Right ventricle myocardium superior (tissue), 1 donor: ENCODE measurements at regions of chr1 and their contacts with region 1.

Region 1: DNA sequence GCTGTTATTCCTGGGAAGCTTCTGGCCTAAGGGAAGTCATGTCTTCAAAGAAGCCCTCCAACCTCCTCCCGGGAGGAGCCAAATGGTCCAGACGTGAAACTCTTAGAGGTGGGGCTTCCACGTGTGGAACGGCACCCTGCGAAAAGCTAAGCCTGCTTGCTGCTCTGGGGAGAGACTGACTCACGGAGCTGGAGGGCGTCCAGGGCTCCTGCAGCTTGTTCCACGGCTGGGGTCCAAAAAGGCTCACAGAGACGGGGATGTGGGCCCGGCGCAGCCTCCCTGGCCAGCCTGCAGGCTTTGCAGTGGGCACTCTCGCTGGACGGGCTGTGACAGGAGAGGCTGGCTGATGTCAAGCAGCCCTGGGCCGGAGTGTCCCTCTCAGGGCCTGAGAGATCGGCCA is 105.1 kb downstream of the COLGALT2 start:
- DNase-seq: peak; percentile 92
- ATAC-seq: peak; percentile 89

Region 2: DNA sequence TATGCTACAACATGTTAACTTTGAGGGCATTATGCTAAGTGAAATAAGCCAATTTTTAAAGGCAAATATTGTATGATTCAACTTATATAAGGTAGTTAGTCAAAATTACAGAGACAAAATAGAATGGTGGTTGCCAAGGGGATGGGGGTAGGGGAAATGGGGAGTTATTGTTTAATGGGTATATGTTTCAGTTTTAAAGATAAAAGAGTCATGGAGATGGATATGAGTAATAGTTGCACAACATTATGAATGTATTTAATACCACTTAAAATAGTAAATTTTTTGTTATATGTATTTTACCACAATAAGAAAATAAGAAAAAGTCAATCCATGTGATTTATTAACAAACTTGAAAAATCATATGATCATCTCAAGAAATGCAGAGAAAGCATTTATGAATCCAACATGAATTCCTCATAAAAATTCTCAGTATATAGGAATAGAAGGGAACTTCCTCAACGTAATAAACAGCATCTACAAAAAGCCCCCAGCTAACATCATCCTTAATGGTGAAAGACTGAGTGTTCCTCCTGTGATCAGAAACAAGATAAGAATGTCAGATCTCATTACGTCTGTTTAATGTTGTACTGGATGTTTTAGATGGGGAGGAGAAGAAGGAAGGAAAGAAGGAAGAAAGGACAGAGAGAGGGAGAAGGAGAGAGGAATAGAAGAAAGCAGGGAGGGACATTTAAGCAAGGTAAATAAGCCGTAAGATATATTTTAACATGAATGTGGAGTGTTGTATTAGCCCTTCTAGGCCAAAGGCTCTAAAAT is 112.4 kb after region 1 on chr1:
- intact Hi-C with region 1: loop called (anchors 10 kb)
- DNase-seq: no peak
- ATAC-seq: no peak